Activated CD4-positive, alpha-beta T cell treated with anti-CD3 and anti-CD28 coated beads, Interleukin-2, amount 10 ng/mL, durations not matched to agents 24 days and 14 days (primary cell): ENCODE measurements at regions of chr15 and their contacts with region 1.

Region 1: DNA sequence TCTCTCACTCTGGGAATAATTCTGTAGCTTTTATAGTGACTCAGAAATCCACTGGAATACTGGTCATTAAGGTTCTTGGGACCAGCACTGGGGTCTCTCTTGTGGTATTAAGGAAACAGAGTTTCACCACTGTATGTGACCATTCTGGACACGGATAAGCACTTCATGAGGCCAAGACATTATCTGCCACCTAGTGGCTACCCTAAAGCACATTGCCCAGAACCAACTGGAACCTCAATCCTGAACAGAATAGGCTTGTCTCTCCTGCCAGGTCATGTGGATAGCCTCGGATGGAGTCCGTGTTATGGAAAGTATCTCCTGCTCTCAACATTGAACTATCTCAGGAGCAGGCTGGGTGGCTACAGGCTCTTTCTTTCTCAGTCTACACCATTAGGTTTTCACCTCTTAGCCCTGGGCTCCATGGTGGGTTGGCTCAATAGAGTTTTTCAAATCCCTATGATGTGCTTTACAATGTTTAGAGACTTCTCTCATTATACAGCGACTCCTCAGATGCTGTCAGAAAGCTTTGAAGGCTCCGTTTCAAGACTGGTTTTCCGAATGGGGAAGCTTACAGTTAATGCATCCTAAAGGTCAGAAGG is 167.6 kb upstream of the ST8SIA2 start:
- DNase-seq: peak; percentile 55
- H3K4me3 Mint-ChIP-seq: no peak overlapping the region
- H3K27ac Mint-ChIP-seq: no peak overlapping the region
- H3K4me1 Mint-ChIP-seq: no peaks in the 10 kb centered on the region
- H3K27me3 Mint-ChIP-seq: peaks cover 3% of the 10 kb centered on the region

Region 2: GRCh38 chr15:92097474-92098178 is 128.5 kb before region 1 on chr15:
- intact Hi-C with region 1: loop called (anchors 2 kb)
- DNase-seq: peak; percentile 85
- H3K4me3 Mint-ChIP-seq: peak overlapping the region; percentile 38
- H3K27ac Mint-ChIP-seq: no peak overlapping the region
- H3K4me1 Mint-ChIP-seq: peaks cover 45% of the 10 kb centered on the region
- H3K27me3 Mint-ChIP-seq: no peaks in the 10 kb centered on the region